Lower leg skin (tissue), 4 donors: ENCODE measurements at regions of chrX and their contacts with region 1.

Region 1: DNA sequence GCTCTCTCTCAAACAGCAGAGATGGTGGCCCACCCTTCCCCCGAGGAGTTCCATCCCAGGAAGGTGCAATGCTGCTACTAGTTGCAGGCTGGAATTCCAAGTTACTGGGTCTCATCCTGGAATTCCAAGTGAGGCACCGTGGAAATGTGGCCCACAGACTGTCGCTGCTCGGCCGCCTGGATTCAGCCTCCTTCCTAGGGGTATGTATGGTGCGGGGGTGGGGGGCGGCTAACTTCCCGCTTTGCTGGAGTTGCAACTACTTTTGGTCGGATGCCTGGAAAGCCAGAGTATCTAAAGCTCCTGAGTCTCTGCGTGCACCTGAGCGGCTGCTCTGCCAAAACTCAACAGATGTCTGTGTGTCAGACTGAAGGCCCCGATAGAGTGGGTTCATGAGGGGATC is 1146.2 kb downstream of the RPA4 start:
- DNase-seq: peak in 1 of 2 donors; percentile 73
- H3K4me3 ChIP-seq: no peak overlapping the region
- CTCF ChIP-seq: no peak
- POLR2A ChIP-seq: no peak

Region 2: GRCh38 chrX:97416461-97416860 is 613.4 kb before region 1 on chrX:
- intact Hi-C with region 1: loop called (anchors 10 kb)
- DNase-seq: no peak
- H3K4me3 ChIP-seq: no peak overlapping the region
- CTCF ChIP-seq: no peak
- POLR2A ChIP-seq: no peak